Posterior cingulate gyrus (tissue), 11 donors: ENCODE measurements at regions of chr3 and their contacts with region 1.

Region 1: DNA sequence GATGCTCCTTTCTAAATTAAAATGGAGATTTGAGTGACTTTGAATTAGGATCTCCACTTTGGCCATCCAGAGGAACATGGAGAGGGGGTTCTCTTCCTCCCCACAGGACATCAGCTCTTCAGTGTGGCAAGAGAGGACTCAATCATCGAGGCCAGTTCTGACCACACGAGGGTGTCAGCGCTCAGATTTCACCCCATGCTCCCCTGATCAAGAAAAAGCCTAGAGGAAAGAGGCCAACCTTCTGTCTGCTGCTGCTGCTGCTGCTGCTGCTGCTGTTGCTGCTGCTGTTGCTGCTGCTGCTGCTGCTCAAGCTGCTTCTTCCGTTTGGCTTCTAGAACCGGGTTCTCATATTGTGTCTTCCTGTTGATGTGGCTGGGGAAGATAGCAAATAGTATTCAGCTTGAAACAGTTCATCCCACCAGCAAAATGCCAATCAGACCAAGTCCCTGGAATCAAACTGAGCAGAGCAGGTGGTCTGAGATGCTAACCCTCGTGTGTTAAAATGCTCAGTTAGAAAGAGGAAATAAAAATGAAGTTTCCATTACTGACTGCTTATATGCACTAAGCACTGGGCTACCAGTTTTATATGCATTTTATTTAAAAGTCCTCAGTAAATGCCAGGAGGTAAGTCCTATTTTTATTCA is 599.0 kb downstream of the MAGI1 start:
- DNase-seq: peak in 9 of 10 donors; percentile 41 to 95 (median 68)

Region 2: DNA sequence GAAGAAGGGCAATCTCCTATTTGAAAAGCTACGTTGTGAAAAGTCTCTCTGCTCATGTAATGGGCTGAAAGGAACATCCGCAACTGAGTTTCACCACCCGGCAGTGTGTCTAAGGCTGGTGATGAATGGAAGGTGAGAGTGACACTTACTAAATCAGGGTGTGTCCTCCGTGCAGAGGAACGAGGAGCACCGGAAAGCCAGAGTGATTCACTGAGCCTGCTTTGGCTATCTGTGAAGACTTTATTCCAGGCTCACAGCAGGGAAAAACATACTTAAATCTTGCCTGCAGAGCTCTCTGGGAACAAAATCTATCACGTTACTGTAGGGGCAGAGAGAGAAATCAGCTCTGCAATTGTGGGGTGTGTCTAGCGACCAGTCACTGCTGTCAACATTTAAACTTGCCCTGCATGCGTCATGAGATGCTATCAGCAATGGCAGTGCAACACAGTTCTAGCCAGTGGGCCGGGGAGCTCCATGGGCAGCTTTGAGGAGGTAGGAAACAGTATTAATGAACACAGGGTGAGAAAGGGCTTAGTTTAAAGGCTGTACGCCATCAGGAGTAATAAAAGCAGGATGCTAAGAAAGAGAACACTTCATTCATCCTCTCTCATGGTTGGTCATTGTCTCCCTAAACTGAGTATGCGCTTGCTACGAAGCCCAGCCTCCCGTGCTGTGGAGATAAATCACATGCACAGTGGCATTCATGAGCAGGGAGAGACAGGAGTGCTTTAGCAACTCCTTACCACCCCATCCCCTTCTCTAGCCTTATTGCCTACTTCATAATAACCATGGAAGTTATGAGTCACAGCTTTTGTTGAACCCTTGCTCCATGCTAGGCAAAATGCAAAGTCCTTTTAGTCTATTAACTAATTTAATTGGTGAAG is 209.3 kb before region 1 on chr3:
- intact Hi-C with region 1: no loop called
- DNase-seq: peak in 1 of 10 donors; percentile 62

Region 3: DNA sequence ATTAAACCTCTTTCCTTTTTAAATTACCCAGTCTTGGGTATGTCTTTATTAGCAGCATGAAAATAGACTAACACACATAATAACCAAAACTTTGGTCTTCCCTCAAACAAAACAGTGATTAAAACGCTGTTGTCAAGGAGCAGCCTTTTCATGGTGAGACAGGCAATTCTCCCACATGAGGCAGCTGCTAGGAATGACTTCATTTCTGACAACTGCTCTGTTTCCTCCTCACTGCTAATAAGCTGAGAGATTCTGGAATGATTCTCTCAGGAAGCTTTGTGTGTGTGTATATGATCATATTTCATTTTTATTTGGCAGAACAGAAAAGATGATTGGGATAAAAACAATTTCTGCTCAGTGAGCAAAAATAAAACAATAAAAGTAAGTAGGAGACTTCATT is 171.3 kb before region 1 on chr3:
- intact Hi-C with region 1: no loop called
- DNase-seq: no peak

Region 4: DNA sequence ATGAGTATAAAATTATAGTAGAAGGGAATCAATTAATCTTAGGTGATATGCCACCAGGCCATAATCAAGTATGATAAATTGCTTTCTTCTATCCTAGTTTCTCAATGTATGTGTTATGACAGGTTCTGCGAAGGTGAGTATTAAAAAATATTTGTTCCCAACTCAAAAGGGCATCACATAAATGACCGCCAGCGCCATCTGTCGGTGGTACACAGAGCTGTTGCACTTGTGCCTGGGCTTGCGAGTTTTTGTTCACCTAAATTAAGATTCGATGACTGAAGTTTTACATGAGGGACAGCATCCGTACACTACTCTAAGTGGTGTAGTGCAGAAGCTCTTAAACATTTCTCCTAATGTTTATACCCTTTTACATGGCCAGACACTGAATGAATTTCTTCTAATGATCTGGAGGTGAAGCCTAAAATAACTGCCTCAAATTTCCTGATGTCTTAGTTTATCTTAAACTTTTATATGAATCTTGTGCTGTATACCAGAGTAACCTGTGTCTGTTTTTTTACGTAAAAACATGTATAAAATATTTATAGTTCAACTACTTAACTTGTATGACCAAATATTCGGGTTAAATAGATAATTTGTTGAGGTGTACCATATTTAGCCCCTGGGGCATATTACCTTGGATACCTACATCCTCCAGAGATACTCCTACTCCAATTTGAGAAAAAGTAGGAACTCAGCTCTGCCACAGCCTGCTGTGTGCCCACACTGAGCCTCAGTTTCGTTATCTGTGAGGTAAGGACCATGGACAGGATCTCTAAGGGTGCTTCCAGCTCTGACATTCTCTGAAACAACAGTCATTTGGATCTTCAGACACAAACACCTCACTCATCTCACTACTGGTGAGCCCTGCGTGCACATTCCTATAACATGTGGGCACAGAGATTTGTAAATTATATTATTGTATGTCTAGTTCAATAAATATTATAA is 233.4 kb after region 1 on chr3:
- intact Hi-C with region 1: loop called (anchors 2 kb)
- DNase-seq: peak; percentile 22 to 94 (median 74)

Region 5: DNA sequence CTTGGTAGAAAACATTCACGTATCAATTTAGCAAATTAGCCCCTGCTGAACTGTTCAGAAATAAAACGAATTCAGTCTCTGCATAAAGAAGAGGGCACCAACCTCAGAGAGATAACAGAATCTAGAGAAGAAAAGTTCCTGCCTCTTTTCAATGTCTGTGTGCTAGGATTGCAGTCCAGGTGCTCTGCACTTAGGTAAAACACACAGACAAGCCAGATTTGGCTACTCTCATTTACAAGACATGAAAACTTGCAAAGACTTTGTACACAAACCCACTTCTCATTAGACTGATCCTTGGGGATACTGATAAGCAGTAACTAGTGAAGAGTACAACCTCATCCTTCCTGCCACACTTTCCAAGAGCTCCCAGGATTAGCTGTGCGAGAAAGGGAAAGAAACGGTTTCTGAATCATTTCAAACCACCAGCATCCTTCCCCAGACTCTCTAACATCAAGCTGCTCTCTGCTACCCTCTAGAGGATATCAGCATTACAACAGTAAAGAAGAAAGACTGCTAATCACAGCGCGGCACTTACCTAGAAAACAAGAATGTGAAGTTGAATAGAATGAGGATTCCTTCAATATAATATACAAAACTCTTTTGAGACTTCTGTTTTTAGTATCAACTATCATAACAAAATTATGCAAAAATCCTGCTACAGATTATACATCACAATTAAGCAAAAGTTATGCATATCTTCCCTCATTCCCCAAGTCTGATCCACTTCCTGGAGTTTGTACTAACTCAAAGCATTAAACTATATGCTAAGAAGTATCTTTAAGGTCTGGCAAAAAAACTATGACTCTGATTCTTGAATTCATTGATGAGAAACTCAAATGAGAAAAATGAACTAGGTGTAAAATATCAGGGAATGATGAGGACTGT is 292.5 kb after region 1 on chr3:
- intact Hi-C with region 1: loop called (anchors 1 kb)
- DNase-seq: no peak

Region 6: GRCh38 chr3:66195347-66195783 is 755.6 kb after region 1 on chr3:
- intact Hi-C with region 1: loop called (anchors 10 kb)
- DNase-seq: peak; percentile 57 to 96 (median 83)